Natural killer cell (primary cell): ENCODE measurements at regions of chr1 and their contacts with region 1.

Region 1: GRCh38 chr1:235367000-235367908 is at the start of gene TBCE:
- DNase-seq: peak; percentile 85 to 87
- ATAC-seq: peak; percentile 100
- H3K4me3 ChIP-seq: peak within 1 kb of the TSS; percentile 66
- H3K4me3 Mint-ChIP-seq: peak within 1 kb of the TSS; percentile 99
- H3K27ac ChIP-seq: peak within 1 kb of the TSS; percentile 36
- H3K27ac Mint-ChIP-seq: peak within 1 kb of the TSS; percentile 88 to 94
- H3K4me1 ChIP-seq: peaks cover 6% of the 10 kb centered on the region
- H3K4me1 Mint-ChIP-seq: peaks cover 14 to 26% of the 10 kb centered on the region in 2 donors
- H3K27me3 ChIP-seq: no peaks in the 10 kb centered on the region
- H3K27me3 Mint-ChIP-seq: no peaks in the 10 kb centered on the region
- CTCF ChIP-seq: no peak
- total RNA-seq, gene TBCE: 24.1 to 25.2 (median 25.0) TPM

Region 2: DNA sequence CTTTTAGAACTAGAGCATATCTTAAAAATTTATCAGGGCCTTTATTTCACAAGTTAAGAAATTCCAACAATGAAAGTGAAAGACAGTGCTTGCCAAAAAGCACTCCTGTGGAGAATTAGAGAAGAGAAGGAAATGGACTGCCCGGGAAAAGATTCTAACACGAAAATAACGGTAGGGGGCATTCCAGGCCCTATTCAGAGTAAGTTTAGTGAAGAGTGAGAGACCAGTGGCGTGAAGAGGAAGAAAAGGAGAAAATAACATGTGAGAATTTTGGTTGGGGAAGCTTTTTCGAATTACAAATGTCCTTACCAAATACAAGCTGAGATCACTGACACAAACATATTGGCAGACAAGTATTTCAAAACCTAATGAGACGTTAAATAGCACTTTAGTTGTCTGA is 167.8 kb before region 1 on chr1:
- intact Hi-C with region 1: no loop called
- DNase-seq: no peak
- ATAC-seq: no peak
- H3K4me3 ChIP-seq: no peak overlapping the region
- H3K4me3 Mint-ChIP-seq: no peak overlapping the region
- H3K27ac ChIP-seq: no peak overlapping the region
- H3K27ac Mint-ChIP-seq: peak overlapping the region; percentile 1 to 29
- H3K4me1 ChIP-seq: no peaks in the 10 kb centered on the region
- H3K4me1 Mint-ChIP-seq: peaks cover 5 to 6% of the 10 kb centered on the region in 2 donors
- H3K27me3 ChIP-seq: no peaks in the 10 kb centered on the region
- H3K27me3 Mint-ChIP-seq: no peaks in the 10 kb centered on the region
- CTCF ChIP-seq: no peak

Region 3: DNA sequence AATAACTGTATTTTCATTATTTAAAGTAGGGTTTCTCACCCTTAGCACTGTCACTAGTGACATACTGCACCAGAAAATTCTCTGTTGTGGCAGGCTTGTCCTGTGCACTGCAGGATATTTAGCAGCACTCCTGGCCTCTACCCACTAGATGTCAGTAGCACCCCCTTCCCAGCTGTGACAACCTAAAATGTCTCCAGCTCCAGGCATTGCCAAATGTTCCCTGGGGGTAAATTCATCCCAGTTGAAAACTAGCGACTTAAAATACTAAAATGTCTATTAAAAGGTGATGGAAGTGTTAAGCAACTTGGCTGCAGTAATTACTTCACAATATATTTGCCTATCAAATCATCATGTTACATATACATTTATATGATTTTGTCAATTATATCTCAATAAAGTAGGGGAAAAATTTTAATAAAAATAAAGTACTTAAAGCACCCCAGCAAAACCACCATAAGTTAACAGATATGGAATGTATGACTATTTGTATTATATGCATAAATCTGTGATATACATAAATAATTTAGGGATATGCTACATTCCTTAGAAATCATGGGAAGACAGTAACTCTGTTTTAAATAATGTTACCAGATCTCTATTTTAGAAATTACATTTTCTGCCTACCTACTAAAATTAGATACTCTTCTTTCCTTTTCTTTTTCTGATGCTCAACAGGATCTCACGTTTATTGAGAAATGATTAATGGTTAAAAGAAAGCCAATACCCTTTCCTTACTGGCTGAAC is 113.9 kb before region 1 on chr1:
- intact Hi-C with region 1: loop called (anchors 2 kb)
- DNase-seq: peak; percentile 34 to 84
- ATAC-seq: peak; percentile 89 to 95 (median 91)
- H3K4me3 ChIP-seq: no peak overlapping the region
- H3K4me3 Mint-ChIP-seq: no peak overlapping the region
- H3K27ac ChIP-seq: no peak overlapping the region
- H3K27ac Mint-ChIP-seq: peak overlapping the region in 1 of 2 donors; percentile 40
- H3K4me1 ChIP-seq: peaks cover 10% of the 10 kb centered on the region
- H3K4me1 Mint-ChIP-seq: peaks cover 19 to 30% of the 10 kb centered on the region in 2 donors
- H3K27me3 ChIP-seq: no peaks in the 10 kb centered on the region
- H3K27me3 Mint-ChIP-seq: no peaks in the 10 kb centered on the region
- CTCF ChIP-seq: peak; percentile 92

Region 4: DNA sequence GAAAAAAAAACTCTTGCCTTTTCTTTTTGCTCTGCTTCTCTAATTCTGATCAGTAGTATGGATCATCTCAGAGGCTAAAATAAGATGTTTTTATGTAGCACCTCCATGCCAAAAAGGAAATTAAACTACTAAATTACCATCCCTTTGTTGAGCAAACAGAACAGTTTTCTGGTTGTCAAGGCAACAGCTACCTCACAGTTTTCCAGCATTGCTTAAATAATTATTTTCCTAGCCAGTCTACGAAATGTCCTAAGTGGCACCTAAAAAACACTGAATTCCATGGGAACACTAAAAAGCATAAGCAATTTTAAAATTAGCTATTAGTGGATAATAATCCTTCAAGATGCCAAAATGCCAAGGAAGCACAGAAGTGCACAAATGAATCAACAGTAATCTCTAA is 100.9 kb before region 1 on chr1:
- intact Hi-C with region 1: no loop called
- DNase-seq: no peak
- ATAC-seq: no peak
- H3K4me3 ChIP-seq: no peak overlapping the region
- H3K4me3 Mint-ChIP-seq: no peak overlapping the region
- H3K27ac ChIP-seq: no peak overlapping the region
- H3K27ac Mint-ChIP-seq: peak overlapping the region; percentile 54 to 58
- H3K4me1 ChIP-seq: peaks cover 32% of the 10 kb centered on the region
- H3K4me1 Mint-ChIP-seq: peaks cover 77 to 80% of the 10 kb centered on the region in 2 donors
- H3K27me3 ChIP-seq: no peaks in the 10 kb centered on the region
- H3K27me3 Mint-ChIP-seq: no peaks in the 10 kb centered on the region
- CTCF ChIP-seq: no peak

Region 5: DNA sequence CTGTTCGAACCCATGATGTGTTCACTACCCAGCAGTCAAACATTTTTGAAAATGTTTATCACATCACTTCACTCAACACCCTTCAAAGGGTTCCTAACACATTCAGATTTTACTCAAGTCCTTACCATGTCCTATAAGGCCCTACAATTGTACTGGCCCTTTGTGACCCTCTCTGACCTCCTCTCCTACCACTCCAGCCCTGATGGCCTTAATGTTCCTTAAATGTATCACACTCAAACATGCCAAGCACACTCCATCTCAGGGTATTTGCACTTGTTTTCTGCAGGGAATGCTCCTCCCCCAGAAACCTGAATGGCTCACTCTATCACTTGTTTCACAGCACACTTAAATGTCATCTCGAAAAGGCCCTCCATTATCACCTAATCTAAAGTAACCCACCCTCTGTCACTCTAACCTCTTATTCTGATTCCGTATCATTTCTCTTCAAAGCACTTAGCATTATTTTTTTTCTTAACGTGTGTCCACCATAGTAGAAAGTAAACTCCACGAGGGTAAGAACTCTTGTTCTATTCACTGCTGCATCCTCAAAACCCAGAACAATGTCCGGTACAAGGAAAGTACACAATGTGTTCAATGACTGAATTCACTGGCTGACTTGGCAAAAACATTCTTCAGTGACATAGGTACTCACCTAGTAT is 46.6 kb before region 1 on chr1:
- intact Hi-C with region 1: no loop called
- DNase-seq: no peak
- ATAC-seq: peak; percentile 5 to 19 (median 8)
- H3K4me3 ChIP-seq: no peak overlapping the region
- H3K4me3 Mint-ChIP-seq: peak overlapping the region; percentile 1
- H3K27ac ChIP-seq: no peak overlapping the region
- H3K27ac Mint-ChIP-seq: peak overlapping the region; percentile 38 to 52
- H3K4me1 ChIP-seq: peaks cover 40% of the 10 kb centered on the region
- H3K4me1 Mint-ChIP-seq: peaks cover 52 to 54% of the 10 kb centered on the region in 2 donors
- H3K27me3 ChIP-seq: no peaks in the 10 kb centered on the region
- H3K27me3 Mint-ChIP-seq: no peaks in the 10 kb centered on the region
- CTCF ChIP-seq: no peak

Region 6: DNA sequence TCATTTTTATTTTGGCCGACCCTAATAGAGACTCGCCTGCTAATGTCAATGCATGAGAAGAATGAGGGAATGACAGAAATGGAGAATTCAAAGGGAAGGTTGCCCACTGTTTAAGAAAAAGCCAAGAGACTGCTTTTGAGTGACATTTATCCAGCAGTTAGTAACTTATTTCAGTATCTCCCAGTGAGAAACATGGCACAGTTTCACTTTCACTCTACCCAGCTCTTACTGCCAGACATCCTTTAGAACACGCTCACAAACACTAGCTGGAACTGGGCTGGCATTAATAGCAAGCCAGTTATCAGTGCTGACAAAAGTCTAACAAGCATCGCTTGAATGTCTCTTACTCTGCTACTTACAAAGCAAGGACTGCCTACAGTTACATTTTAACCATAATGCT is 30.4 kb before region 1 on chr1:
- intact Hi-C with region 1: loop called (anchors 2 kb)
- DNase-seq: peak in 1 of 2 donors; percentile 75
- ATAC-seq: peak; percentile 93 to 98 (median 97)
- H3K4me3 ChIP-seq: no peak overlapping the region
- H3K4me3 Mint-ChIP-seq: peak overlapping the region; percentile 78
- H3K27ac ChIP-seq: peak overlapping the region; percentile 73
- H3K27ac Mint-ChIP-seq: peak overlapping the region; percentile 88 to 93
- H3K4me1 ChIP-seq: no peaks in the 10 kb centered on the region
- H3K4me1 Mint-ChIP-seq: peaks cover 13 to 14% of the 10 kb centered on the region in 2 donors
- H3K27me3 ChIP-seq: no peaks in the 10 kb centered on the region
- H3K27me3 Mint-ChIP-seq: no peaks in the 10 kb centered on the region
- CTCF ChIP-seq: no peak

Region 7: DNA sequence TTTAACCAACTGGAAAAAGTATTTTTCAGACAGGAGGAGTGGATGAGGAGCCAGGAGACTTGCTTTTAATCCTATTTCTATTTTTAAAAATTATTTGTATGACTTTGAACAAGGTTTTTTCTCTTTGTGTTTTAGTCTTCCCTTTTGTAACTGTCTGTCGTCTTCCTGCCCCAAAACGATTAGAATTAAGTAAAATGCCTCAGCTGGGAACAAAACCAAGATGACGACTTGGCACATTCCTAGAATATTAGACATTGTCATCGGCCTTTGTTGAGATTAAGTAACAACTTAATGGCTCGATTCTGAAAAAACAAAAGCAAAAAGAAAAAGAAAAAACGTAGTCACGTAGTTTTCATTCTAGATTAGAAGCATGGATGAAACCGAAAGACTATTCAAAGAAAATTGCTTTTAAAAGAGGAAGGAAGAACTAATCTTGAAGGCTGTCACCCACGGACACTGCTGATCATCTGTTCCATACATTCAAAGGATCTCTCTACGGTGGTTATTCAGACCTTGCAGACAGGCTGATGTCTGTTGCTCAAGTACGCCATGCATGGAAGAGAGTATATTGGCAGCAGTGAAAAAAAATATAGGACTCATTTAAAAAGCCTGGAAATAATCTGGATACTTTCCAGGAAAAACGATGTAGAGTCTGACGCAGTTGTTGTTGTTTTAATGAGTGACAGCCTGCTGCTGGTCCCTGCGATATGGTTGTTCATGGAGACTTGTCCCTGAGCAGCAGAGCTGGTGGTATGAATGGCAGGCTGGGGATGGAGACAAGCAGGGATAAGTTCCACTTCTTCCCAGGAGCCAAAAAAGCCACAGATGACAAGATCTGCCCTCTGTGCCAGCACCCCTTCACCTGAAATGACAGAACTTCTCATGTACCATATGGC is 265.5 kb after region 1 on chr1:
- intact Hi-C with region 1: no loop called
- DNase-seq: no peak
- ATAC-seq: no peak
- H3K4me3 ChIP-seq: no peak overlapping the region
- H3K4me3 Mint-ChIP-seq: no peak overlapping the region
- H3K27ac ChIP-seq: no peak overlapping the region
- H3K27ac Mint-ChIP-seq: no peak overlapping the region
- H3K4me1 ChIP-seq: no peaks in the 10 kb centered on the region
- H3K4me1 Mint-ChIP-seq: peaks cover 0 to 6% of the 10 kb centered on the region in 2 donors
- H3K27me3 ChIP-seq: no peaks in the 10 kb centered on the region
- H3K27me3 Mint-ChIP-seq: peaks cover 6 to 8% of the 10 kb centered on the region in 2 donors
- CTCF ChIP-seq: no peak